ENCODE measurements at regions of chr4 and their contacts with region 1.

Region 1: DNA sequence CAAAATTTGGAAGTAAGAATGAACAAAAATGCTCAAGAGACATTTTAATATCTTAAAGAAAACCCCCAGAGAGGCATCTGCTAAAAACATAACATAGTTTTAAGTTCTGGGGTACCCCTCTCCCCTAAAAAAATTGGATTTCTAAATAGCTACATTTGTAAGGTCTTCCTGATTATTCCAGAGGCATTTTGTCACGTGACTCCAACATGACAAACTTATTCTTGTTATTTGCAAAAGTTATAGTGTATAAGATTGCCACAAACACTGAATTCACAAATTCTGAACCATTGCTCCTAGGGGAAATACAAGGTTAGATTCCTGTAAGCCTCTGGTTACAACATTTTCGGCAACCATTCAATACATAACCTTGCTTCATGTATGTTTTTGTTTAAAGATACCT is 73.4 kb downstream of the COL25A1 start:
- DNase-seq: no peak
- H3K4me3 ChIP-seq: no peak overlapping the region
- H3K27ac ChIP-seq: no peak overlapping the region
- H3K4me1 ChIP-seq: no peaks in the 10 kb centered on the region
- H3K27me3 ChIP-seq: no peaks in the 10 kb centered on the region
- CTCF ChIP-seq: no peak
- POLR2A ChIP-seq: no peak

Region 2: DNA sequence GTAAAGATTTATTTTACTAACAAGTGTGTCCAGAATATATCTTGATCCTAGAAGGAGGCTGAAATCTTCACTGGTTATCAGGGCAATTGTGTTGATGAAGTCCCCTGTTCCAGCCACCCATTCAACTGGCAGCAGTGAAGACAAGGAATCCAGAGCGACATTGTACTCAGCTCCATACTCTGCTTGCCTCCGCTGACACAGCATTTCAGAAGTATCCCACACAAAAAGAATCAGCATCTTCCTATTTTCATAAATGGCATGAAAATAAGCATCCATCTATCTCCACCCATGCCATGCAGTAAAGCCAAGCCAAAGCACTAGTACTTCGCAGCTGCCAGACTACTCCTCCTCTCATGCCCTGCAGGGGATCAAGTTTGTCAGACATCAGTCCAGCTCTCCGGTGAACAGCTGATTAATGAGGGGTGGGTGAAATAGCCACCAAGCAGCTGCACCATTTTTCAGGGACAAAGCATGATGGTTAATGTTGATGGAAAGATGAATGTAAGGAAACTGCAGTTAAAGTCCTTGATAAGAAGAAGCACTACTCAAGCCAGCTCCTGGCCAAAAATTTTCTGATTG is 19.4 kb after region 1 on chr4:
- CTCF ChIA-PET with region 1: interaction called, 3 read pairs
- POLR2A ChIA-PET with region 1: no interaction called
- dilution Hi-C with region 1: no loop called
- intact Hi-C with region 1: loop called (anchors 1 kb)
- DNase-seq: no peak
- H3K4me3 ChIP-seq: no peak overlapping the region
- H3K27ac ChIP-seq: no peak overlapping the region
- H3K4me1 ChIP-seq: no peaks in the 10 kb centered on the region
- H3K27me3 ChIP-seq: no peaks in the 10 kb centered on the region
- CTCF ChIP-seq: no peak
- POLR2A ChIP-seq: no peak

Region 3: DNA sequence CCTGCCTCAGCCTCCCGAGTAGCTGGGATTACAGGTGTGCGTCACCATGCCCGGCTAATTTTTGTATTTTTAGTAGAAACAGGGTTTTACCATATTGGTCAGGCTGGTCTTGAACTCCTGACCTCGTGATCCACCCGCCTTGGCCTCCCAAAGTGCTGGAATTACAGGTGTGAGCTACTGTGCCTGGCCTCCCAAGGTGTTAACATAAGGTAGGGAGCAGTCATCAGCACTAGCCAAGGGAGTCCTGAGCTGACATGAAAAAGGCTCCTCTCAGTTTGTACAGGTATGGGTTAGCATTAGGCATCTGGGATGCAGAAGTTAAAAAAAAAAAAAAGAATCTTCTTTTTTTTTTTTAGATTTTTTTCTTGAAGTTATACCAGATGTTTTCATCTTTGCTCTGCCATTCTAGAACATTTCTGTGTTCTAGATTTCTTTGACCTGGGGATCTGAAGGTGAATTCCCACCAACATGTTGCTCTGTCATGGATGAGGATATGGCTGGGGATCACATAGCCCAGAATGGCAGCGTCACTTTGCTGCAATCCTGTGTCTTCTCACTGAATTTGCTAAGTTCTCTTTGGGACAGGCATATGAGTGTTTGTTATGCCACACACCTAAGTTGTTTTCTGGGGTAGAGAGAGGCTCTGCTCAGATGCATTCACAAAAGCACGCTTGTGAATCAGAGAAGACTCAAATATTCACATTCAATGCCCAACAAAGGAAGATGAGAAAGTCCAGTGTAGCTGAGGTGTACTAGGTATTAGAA is 525.2 kb after region 1 on chr4:
- CTCF ChIA-PET with region 1: no interaction called
- POLR2A ChIA-PET with region 1: no interaction called
- dilution Hi-C with region 1: no loop called
- intact Hi-C with region 1: no loop called
- DNase-seq: no peak
- H3K4me3 ChIP-seq: no peak overlapping the region
- H3K27ac ChIP-seq: no peak overlapping the region
- H3K4me1 ChIP-seq: no peaks in the 10 kb centered on the region
- H3K27me3 ChIP-seq: no peaks in the 10 kb centered on the region
- CTCF ChIP-seq: no peak
- POLR2A ChIP-seq: no peak

Region 4: GRCh38 chr4:110394871-110395270 is 1165.8 kb after region 1 on chr4:
- CTCF ChIA-PET with region 1: no interaction called
- POLR2A ChIA-PET with region 1: no interaction called
- dilution Hi-C with region 1: no loop called
- intact Hi-C with region 1: no loop called
- DNase-seq: no peak
- H3K4me3 ChIP-seq: no peak overlapping the region
- H3K27ac ChIP-seq: no peak overlapping the region
- H3K4me1 ChIP-seq: no peaks in the 10 kb centered on the region
- H3K27me3 ChIP-seq: no peaks in the 10 kb centered on the region
- CTCF ChIP-seq: no peak
- POLR2A ChIP-seq: no peak